K562 (cell line): ENCODE measurements at regions of chr9 and their contacts with region 1.

Region 1: DNA sequence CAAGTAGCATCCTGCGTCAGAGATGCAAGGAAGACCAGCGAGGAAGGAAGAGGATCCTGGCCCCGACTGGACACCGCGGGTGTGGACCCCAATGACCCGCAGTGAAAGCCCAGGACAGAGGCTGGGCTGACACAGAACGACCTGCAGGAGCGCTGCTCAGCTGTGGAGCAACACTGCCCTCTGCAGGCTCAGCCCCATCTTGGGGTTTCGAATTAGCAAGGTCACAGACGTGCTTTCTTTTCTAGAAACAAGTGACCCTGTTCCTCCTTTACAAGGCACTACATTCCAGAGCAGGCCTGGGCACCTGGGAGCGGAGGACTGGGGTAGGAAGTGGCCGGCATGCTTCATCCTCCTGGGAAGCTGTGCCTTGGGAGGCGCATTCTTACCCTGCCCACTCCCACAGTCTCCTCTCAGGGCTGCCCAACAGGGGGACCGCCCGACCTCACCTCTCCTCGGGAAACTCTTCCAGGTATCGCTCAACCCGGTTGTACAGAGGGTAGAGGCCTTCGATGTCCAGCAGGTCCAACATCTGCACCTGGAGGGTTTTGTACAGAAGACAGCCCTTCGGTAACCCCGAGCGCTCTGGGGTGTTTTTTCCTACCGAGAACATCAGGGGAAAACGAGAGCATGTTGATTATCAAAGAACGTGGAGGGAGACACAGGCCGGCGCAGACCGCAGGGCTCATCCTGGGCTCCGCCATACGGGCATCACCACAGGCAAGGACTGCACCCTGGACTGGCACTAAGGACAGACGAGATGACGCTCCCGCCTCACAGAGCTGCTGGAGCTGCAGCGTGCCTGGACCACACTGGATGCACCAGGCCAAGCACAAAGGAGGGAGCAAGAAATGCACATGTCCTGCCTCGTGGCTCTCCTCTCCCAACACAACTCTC is 35.0 kb downstream of the IPPK start:
- DNase-seq: peak; percentile 82 to 85 (median 83)
- ATAC-seq: peak; percentile 99
- H3K4me3 ChIP-seq: no peak overlapping the region
- H3K27ac ChIP-seq: no peak overlapping the region
- H3K4me1 ChIP-seq: peaks cover 0 to 5% of the 10 kb centered on the region in 2 experiments; a peak in 1 of 5 replicates
- H3K27me3 ChIP-seq: no peaks in the 10 kb centered on the region
- CTCF ChIP-seq: peak; percentile 98 to 100 (median 99)
- EP300 ChIP-seq: no peak
- POLR2A ChIP-seq: no peak
- RAD21 ChIP-seq: peak; percentile 87 to 94

Region 2: DNA sequence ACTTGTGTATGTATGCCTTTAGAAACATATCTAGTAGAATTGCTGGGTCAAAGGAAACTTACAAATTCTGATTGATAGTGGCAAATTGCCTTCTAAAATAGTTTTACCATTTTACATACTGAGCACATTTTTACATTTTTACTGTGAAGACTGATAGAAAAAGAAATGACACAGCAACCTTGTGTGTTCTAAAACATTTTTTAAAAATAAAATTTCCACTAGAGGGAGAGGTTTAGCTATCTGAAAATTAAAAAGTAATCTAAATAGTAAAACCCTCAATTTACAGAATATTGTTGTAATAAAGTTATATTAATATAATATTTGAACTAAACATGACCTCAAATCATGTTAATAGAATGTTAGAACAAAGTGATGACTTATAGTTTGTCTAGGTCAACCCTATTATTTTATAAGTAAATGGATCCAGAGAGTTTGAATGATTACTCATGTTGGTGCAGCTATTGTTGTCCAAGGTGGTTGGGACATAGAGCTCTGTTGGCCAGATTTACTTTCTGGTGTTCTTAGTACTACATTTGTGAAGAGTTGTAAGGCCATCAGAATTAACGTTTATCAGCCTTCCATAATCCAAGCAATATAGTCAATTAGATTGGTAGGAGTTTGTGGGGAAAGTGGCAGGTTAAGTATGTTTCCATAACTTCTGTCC is 292.0 kb before region 1 on chr9:
- CTCF ChIA-PET with region 1: interaction called, 6 read pairs
- POLR2A ChIA-PET with region 1: no interaction called
- in situ Hi-C with region 1: no loop called
- intact Hi-C with region 1: loop called (anchors 5 kb)
- DNase-seq: no peak
- ATAC-seq: no peak
- H3K4me3 ChIP-seq: no peak overlapping the region
- H3K27ac ChIP-seq: no peak overlapping the region
- H3K4me1 ChIP-seq: no peaks in the 10 kb centered on the region
- H3K27me3 ChIP-seq: no peaks in the 10 kb centered on the region
- CTCF ChIP-seq: peak in 1 of 3 experiments; percentile 27; a peak in 1 of 6 replicates
- EP300 ChIP-seq: no peak
- POLR2A ChIP-seq: no peak
- RAD21 ChIP-seq: no peak

Region 3: GRCh38 chr9:92507496-92507895 is 127.5 kb before region 1 on chr9:
- CTCF ChIA-PET with region 1: interaction called, 6 read pairs
- POLR2A ChIA-PET with region 1: no interaction called
- in situ Hi-C with region 1: no loop called
- intact Hi-C with region 1: loop called (anchors 1 kb)
- DNase-seq: no peak
- ATAC-seq: no peak
- H3K4me3 ChIP-seq: no peak overlapping the region
- H3K27ac ChIP-seq: no peak overlapping the region
- H3K4me1 ChIP-seq: peaks cover 8 to 19% of the 10 kb centered on the region in 2 experiments
- H3K27me3 ChIP-seq: no peaks in the 10 kb centered on the region
- CTCF ChIP-seq: no peak
- EP300 ChIP-seq: no peak
- POLR2A ChIP-seq: no peak
- RAD21 ChIP-seq: no peak